ENCODE measurements at regions of chr17 and their contacts with region 1.

Region 1: GRCh38 chr17:75764711-75765421 is at the start of gene GALK1:
- DNase-seq: peak; percentile 58 to 89 (median 70)
- ATAC-seq: peak; percentile 95
- H3K4me3 ChIP-seq: peak within 1 kb of the TSS; percentile 65
- H3K4me3 Mint-ChIP-seq: peak within 1 kb of the TSS; percentile 74
- H3K27ac ChIP-seq: no peak within 1 kb of the TSS
- H3K27ac Mint-ChIP-seq: peak within 1 kb of the TSS; percentile 44
- H3K4me1 ChIP-seq: peaks cover 24% of the 10 kb centered on the region
- H3K4me1 Mint-ChIP-seq: peaks cover 16% of the 10 kb centered on the region
- H3K27me3 ChIP-seq: no peaks in the 10 kb centered on the region
- H3K27me3 Mint-ChIP-seq: no peaks in the 10 kb centered on the region
- CTCF ChIP-seq: peak; percentile 27
- total RNA-seq, gene GALK1: 5.9 to 6.0 TPM

Region 2: DNA sequence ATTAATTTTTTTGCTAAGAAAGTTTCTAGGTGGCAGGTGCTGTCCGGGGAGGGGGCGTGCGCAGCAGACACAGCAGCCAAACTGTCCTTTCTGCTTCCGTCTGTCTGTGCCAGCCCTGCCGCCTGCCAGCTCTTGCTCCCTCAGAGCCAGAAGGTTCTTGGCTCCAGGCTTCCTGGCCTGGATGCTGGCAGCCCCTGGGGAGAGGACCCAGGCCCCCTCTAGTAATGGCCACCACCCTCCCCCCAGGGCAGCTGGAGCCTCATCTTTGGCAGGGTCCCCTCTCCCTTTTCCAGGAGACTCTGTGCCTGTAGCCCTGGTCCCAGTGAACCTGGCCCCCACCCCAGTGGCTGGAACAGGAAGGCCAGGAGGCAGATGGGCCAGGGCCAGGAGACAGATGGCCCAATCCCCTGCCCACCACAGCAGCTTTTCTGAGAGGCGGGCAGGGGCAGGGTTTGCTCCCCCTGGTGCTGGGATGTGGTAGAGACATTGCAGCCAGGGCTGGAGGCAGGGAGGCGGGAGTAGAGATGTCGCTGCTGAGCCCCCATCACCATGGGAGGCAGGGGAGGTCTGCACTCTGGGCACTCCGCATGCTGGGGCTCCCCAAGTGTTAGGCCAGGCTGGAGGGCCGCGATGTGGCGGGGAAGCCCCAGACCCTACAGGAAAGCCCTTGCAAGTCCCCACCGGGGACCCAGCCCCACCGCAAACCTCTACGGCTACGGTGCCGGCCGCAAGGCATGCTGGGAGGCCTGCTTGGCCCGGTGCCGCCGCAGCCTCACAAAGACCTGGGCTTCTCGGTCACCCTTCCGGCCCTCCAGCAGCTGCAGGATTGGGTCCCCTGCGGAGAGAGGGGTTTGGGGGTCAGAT is 62.6 kb after region 1 on chr17:
- CTCF ChIA-PET with region 1: interaction called, 16 read pairs
- POLR2A ChIA-PET with region 1: interaction called, 13 read pairs
- intact Hi-C with region 1: loop called in 1 of 2 experiments (anchors 5 kb)
- DNase-seq: peak; percentile 30 to 85 (median 61)
- ATAC-seq: peak; percentile 76
- H3K4me3 ChIP-seq: peak overlapping the region; percentile 32
- H3K4me3 Mint-ChIP-seq: peak overlapping the region; percentile 34
- H3K27ac ChIP-seq: peak overlapping the region; percentile 39 to 46
- H3K27ac Mint-ChIP-seq: peak overlapping the region; percentile 86
- H3K4me1 ChIP-seq: peaks cover 46% of the 10 kb centered on the region
- H3K4me1 Mint-ChIP-seq: peaks cover 17% of the 10 kb centered on the region
- H3K27me3 ChIP-seq: no peaks in the 10 kb centered on the region
- H3K27me3 Mint-ChIP-seq: no peaks in the 10 kb centered on the region
- CTCF ChIP-seq: peak; percentile 84

Region 3: GRCh38 chr17:76005263-76006149 is 240.6 kb after region 1 on chr17:
- CTCF ChIA-PET with region 1: no interaction called
- POLR2A ChIA-PET with region 1: no interaction called
- intact Hi-C with region 1: loop called in 1 of 2 experiments (anchors 5 kb)
- DNase-seq: peak; percentile 63 to 90 (median 78)
- ATAC-seq: peak; percentile 55
- H3K4me3 ChIP-seq: no peak overlapping the region
- H3K4me3 Mint-ChIP-seq: no peak overlapping the region
- H3K27ac ChIP-seq: no peak overlapping the region
- H3K27ac Mint-ChIP-seq: no peak overlapping the region
- H3K4me1 ChIP-seq: no peaks in the 10 kb centered on the region
- H3K4me1 Mint-ChIP-seq: no peaks in the 10 kb centered on the region
- H3K27me3 ChIP-seq: no peaks in the 10 kb centered on the region
- H3K27me3 Mint-ChIP-seq: no peaks in the 10 kb centered on the region
- CTCF ChIP-seq: peak; percentile 77